ENCODE measurements at regions of chr3 and their contacts with region 1.

Region 1: GRCh38 chr3:41893977-41894376 is 67.9 kb downstream of the ULK4 start:
- DNase-seq: no peak
- ATAC-seq: no peak

Region 2: GRCh38 chr3:42012935-42013690 is 119.1 kb after region 1 on chr3:
- intact Hi-C with region 1: loop called in 1 of 2 experiments (anchors 10 kb)
- DNase-seq: peak; percentile 81
- ATAC-seq: peak; percentile 90 to 91

Region 3: GRCh38 chr3:42090973-42091731 is 197.2 kb after region 1 on chr3 and contains the start of gene TRAK1:
- intact Hi-C with region 1: loop called in 1 of 2 experiments (anchors 10 kb)
- DNase-seq: peak; percentile 53
- ATAC-seq: peak; percentile 78 to 84
- total RNA-seq, gene TRAK1: 197 to 211 TPM

Region 4: GRCh38 chr3:42101048-42101447 is 207.1 kb after region 1 on chr3:
- intact Hi-C with region 1: loop called (anchors 2 to 10 kb)
- DNase-seq: peak; percentile 61
- ATAC-seq: peak; percentile 67 to 90

Region 5: DNA sequence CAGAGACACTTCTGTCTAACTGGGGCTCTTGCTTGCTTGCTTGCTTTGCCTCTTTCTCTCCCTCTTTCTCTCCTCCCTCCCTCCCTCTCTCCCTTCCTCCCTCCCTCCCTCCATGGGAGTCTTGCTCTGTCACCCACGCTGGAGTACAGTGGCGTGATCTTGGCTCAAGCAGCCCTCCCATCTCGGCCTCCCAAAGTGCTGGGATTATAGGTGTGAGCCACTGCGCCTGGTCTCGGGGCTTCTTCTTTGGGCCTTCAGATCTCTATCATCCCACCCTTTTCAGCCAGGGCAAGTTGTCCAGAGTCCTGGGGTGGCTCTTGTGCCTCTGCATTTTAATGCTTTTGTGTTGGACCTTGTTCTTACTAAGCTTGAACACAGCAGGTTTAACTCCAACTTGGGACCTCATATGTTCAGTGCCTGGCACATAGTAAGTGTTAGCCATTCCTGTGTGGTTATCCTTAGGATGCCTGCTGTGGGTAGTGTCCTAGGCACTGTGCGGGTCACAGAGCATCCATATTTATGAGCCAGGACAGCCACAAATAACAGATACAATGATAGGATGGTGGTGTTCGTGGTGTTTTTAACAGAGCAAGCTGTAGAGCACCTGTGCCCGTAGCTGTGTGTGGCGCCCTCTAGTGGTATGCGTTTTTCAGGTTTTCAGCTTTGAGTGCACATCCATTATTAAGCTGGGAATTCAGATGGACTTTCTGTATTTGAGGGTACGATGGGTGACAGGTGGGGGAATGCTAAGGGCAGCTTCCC is 296.9 kb after region 1 on chr3:
- intact Hi-C with region 1: loop called (anchors 2 to 10 kb)
- DNase-seq: peak; percentile 49
- ATAC-seq: peak; percentile 42 to 62

Region 6: DNA sequence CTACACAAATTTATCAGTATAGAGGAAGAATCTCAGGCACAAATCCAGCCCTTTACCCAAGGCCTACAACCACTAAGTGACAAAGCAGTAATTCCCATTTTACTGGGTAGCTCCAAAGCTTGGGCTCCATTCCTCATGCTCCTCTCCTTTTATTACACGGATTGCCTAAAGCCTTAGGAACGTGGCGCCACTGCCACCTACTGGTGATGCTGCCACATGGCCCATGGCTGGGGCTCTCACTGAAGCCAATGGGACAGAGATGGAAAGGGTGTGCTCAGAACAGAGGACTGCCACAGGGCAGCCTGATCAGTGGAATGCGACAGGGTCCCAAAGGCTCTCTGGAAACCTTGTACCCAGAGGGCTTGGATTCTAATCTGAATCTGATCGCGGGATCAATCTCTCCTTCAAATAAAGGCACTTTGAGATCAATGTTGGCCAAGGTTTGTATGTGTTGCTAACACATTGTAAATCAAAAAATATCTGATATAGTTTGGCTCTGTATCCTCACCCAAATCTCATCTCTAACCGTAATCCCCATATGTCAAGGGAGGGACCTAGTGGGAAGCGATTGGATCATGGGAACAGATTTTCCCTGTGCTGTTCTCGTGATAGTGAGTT is 550.0 kb after region 1 on chr3:
- intact Hi-C with region 1: loop called in 1 of 2 experiments (anchors 5 kb)
- DNase-seq: peak; percentile 83
- ATAC-seq: peak; percentile 96 to 97

Measured in left cardiac atrium (tissue), 4 donors.